Left cardiac atrium (tissue), 4 donors: ENCODE measurements at regions of chr5 and their contacts with region 1.

Region 1: DNA sequence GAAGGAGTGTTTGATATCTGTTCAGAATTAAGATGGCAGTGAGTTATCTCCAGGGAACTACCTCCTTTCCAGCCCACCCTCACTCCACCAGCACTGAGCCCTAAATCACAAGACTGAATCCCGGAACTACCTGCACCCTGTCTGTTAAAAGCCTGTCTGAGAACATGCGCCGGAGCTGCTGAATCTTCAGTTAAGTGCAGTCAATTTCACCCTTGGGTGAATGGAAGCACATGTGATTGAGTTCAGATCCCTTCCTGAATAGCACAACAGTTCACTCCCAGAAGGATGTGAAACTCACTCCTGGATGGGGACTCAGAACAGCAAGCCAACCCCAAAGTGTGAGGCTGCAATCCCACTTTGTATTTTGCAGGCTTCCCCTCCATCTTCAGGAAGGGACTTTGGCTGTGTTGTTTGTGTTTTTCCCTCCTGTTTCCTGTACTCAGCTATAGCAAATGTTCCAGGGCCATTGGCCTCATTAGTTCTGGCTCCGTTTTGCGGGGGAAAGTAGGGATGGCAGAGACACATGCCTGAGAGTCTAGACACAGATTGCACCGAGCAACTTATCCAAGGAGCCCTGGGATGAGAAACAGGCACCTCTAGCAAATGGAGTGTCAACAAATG is 43.4 kb downstream of the DPYSL3 start:
- DNase-seq: no peak
- ATAC-seq: peak; percentile 46 to 66

Region 2: DNA sequence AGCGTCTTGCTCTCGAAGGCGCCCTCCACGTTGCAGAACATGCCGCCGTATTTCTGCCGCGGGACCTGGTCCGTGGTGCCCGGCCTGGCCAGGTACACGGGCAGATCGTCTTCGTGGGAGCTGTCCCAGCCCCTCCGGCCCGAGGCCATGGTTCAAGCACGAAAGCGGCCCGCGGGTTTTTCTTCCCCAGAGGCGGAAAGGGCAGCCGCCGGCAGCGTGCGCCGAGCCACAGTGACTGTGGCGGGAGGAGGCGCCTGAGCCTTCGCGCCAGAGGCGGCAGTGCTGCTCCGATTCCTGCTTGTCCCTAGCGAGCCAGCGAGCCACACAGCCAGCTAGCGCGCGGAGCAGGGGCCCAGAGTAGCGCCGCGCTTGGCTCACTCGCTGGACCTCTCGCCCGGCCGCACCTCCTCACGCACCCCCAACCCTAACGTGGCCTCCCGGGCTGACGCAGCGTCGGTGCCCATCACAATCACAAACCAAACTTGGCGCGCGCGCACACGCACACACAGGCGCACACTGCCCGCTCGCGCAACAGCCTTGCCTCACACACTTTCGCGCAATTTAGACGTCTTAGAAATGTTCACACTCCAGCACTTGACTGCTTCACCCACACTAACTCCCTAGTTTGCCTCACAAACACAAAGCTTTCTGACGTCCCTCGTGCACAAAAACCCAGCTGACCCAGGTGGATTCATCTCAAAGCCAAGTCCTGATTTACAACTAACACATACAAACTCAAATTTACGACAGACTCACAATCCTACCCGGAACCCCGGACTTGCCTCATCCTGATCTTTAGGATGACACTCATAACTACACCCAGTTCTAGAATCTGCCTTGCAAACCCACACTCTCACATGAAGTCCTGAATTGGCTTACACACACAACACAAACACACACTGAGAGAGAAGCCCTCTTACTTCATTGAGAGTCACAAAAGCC is 43.5 kb after region 1 on chr5 and contains the start of gene DPYSL3:
- intact Hi-C with region 1: loop called in 1 of 2 experiments (anchors 5 kb)
- DNase-seq: peak; percentile 83
- ATAC-seq: peak; percentile 95 to 97
- total RNA-seq, gene DPYSL3: 42.4 to 55.7 TPM